ENCODE measurements at regions of chr3 and their contacts with region 1.

Region 1: GRCh38 chr3:47617086-47618010 is 38.7 kb upstream of the CSPG5 start:
- DNase-seq: no peak
- H3K4me3 ChIP-seq: no peak overlapping the region
- H3K27ac ChIP-seq: no peak overlapping the region
- H3K4me1 ChIP-seq: no peaks in the 10 kb centered on the region
- H3K27me3 ChIP-seq: no peaks in the 10 kb centered on the region
- CTCF ChIP-seq: no peak
- EP300 ChIP-seq: no peak
- POLR2A ChIP-seq: no peak
- RAD21 ChIP-seq: no peak

Region 2: GRCh38 chr3:47628426-47628825 is 11.1 kb after region 1 on chr3:
- CTCF ChIA-PET with region 1: interaction called, 10 read pairs
- POLR2A ChIA-PET with region 1: no interaction called
- DNase-seq: no peak
- H3K4me3 ChIP-seq: no peak overlapping the region
- H3K27ac ChIP-seq: no peak overlapping the region
- H3K4me1 ChIP-seq: no peaks in the 10 kb centered on the region
- H3K27me3 ChIP-seq: no peaks in the 10 kb centered on the region
- CTCF ChIP-seq: no peak
- EP300 ChIP-seq: no peak
- POLR2A ChIP-seq: no peak
- RAD21 ChIP-seq: no peak

Region 3: DNA sequence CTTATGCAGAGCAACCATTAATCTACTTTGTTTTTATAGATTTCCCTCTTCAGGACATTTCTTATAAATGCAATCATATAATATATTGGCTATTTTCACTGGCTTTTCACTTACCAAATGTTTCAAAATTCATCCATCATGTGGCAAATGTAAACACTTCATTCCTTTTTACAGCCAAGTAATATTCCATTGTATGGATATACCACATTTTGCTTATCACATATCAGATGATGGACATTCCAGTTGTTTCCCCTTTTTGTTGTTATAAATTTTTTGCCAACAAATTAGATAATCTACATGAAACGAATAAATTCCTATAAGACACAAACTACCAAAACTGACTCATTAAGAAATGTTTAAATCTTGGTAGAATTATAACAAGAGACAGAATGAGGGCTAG is 41.1 kb after region 1 on chr3:
- CTCF ChIA-PET with region 1: no interaction called
- POLR2A ChIA-PET with region 1: no interaction called
- DNase-seq: no peak
- H3K4me3 ChIP-seq: no peak overlapping the region
- H3K27ac ChIP-seq: no peak overlapping the region
- H3K4me1 ChIP-seq: no peaks in the 10 kb centered on the region
- H3K27me3 ChIP-seq: no peaks in the 10 kb centered on the region
- CTCF ChIP-seq: no peak
- EP300 ChIP-seq: no peak
- POLR2A ChIP-seq: no peak
- RAD21 ChIP-seq: no peak